ENCODE measurements at regions of chr2 and their contacts with region 1.

Region 1: DNA sequence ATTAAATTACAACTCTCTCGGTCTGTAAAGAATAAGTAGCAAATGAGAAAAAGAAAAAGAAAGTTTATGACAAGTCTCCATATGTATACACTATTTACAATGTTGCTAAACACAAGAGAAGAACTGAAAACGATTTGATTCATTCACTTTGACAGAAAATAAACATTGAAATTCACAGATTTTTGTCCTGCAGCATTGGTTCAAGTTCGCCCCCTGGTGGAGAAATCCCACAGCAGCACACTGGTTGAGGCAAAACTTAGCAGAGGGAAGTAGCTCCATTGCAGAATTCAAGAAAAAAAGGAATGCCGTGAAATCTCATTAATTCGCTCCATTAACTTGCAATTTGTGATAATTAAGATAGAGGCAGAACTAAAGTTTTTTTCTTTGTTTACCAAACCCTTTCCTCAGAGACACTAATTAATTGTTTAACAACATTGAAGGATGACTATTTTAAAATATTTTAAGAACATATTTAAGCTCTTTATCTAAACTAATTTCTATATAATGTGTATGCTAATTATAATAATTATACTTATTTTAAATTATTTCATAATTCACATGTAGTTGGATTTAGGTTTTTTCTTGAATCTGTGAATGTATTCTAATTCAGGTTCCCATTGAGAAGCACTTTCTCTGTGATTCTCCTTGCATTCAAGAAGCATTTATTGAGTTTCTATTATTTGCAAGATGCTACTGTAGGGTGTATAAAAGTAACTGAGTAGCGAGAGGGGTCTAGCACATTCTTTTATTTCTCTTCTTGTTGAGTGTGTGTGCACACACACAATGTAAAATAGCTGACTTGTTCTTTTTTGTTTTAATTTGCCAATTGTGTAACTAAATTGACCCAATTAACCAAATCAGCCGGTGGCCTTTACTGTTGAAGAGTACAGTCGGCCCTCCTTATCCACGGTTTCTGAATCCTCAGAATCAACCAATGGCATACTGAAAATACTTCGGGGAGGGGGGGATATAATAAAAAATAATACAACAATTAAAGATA is 74.1 kb downstream of the COL4A3 start:
- DNase-seq: peak; percentile 63 to 76
- ATAC-seq: peak in 3 of 8 donors; percentile 58 to 75 (median 64)
- H3K4me3 ChIP-seq: no peak overlapping the region
- H3K27ac ChIP-seq: no peak overlapping the region
- H3K4me1 ChIP-seq: no peaks in the 10 kb centered on the region
- H3K27me3 ChIP-seq: no peaks in the 10 kb centered on the region
- CTCF ChIP-seq: peak; percentile 88 to 99 (median 96)

Region 2: GRCh38 chr2:227125506-227125905 is 113.0 kb before region 1 on chr2:
- intact Hi-C with region 1: loop called (anchors 1 to 2 kb)
- DNase-seq: no peak
- ATAC-seq: no peak
- H3K4me3 ChIP-seq: no peak overlapping the region
- H3K27ac ChIP-seq: no peak overlapping the region
- H3K4me1 ChIP-seq: peaks cover 0 to 7% (median 0%) of the 10 kb centered on the region in 9 donors
- H3K27me3 ChIP-seq: no peaks in the 10 kb centered on the region
- CTCF ChIP-seq: no peak

Region 3: GRCh38 chr2:227324995-227325838 is 86.7 kb after region 1 on chr2 and contains the start of gene MFF:
- intact Hi-C with region 1: no loop called
- DNase-seq: peak; percentile 92 to 94
- ATAC-seq: peak; percentile 99 to 100 (median 100)
- H3K4me3 ChIP-seq: peak within 1 kb of the TSS; percentile 69 to 99 (median 96)
- H3K27ac ChIP-seq: peak within 1 kb of the TSS; percentile 76 to 98 (median 94)
- H3K4me1 ChIP-seq: peaks cover 0 to 37% (median 17%) of the 10 kb centered on the region in 9 donors
- H3K27me3 ChIP-seq: no peaks in the 10 kb centered on the region
- CTCF ChIP-seq: peak in 4 of 9 donors; percentile 25 to 39 (median 30)
- total RNA-seq, gene MFF: 58.4 to 102 (median 73.8) TPM

Region 4: GRCh38 chr2:228768818-228769217 is 1530.3 kb after region 1 on chr2:
- intact Hi-C with region 1: no loop called
- DNase-seq: no peak
- ATAC-seq: peak in 6 of 8 donors; percentile 25 to 71 (median 54)
- H3K4me3 ChIP-seq: no peak overlapping the region
- H3K27ac ChIP-seq: peak overlapping the region in 2 of 10 donors; percentile 6 to 10
- H3K4me1 ChIP-seq: peaks cover 0 to 11% (median 0%) of the 10 kb centered on the region in 9 donors
- H3K27me3 ChIP-seq: no peaks in the 10 kb centered on the region
- CTCF ChIP-seq: no peak

Measured in heart right ventricle (tissue), 16 donors.